PC-9 (cell line): ENCODE measurements at regions of chr20 and their contacts with region 1.

Region 1: DNA sequence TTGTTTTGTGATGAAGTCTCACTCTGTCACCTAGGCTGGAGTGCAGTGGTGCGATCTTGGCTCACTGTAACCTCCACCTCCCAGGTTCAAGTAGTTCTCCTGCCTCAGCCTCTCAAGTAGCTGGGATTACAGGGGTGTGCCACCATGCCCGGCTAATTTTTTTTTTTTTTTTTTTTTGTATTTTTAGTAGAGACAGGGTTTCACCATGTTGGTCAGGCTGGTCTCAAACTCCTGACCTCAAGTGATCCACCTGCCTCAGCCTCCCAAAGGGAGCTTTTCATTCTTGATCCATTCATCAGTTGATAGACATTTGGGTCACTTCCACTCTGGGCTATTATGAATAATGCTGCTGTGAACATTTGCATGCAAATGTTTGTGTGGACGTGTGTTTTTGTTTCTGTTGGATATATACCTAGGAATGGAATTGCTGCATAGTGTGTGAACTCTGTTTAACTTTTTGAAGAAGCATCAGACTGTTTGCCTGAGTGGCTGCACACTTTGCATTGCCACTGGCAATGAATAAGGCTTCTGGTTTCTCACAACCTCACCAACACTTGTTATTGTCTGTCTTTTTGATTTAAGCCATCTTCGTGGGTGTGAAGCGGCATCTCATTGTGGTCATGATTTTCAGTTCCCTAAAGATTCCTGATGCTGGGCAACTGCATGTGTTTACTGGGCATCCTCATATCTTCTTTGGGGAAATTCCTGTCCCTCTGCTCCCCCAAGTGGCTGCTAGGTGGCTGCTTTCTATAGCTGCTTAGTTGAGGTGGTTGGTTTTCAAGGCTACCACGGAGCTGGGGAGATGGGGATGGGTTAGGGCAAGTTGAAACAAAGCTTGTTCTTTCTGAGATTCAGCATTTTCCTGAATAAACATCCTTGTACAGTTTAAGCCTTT is 403.6 kb upstream of the SULF2 start:
- DNase-seq: peak; percentile 23 to 49
- H3K4me3 ChIP-seq: no peak overlapping the region
- H3K27ac ChIP-seq: no peak overlapping the region
- H3K4me1 ChIP-seq: peaks cover 22% of the 10 kb centered on the region
- H3K27me3 ChIP-seq: no peaks in the 10 kb centered on the region
- CTCF ChIP-seq: peak; percentile 61

Region 2: DNA sequence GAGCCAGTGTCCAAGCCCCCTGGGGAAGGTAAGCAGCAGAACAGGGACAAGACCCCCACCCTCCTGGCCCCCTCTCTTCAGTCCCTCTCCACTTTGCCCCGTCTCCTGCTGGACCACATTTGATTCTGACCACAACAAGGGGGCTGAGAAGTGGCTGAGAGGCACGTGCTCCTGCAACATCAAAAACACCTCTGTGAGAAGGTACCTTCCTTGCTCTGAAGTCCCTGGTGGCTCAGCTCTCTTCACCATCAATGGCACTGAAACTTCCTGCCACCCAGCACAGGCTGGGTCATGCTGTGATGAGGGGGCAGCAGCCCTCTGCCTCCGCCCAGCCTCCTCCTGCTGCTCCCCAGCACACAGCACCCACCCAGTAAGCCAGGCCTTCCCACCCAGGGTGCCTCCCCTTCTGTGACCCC is 842.8 kb before region 1 on chr20:
- CTCF ChIA-PET with region 1: interaction called, 11 read pairs
- POLR2A ChIA-PET with region 1: no interaction called
- intact Hi-C with region 1: no loop called
- DNase-seq: no peak
- H3K4me3 ChIP-seq: no peak overlapping the region
- H3K27ac ChIP-seq: no peak overlapping the region
- H3K4me1 ChIP-seq: peaks cover 25% of the 10 kb centered on the region
- H3K27me3 ChIP-seq: no peaks in the 10 kb centered on the region
- CTCF ChIP-seq: no peak

Region 3: DNA sequence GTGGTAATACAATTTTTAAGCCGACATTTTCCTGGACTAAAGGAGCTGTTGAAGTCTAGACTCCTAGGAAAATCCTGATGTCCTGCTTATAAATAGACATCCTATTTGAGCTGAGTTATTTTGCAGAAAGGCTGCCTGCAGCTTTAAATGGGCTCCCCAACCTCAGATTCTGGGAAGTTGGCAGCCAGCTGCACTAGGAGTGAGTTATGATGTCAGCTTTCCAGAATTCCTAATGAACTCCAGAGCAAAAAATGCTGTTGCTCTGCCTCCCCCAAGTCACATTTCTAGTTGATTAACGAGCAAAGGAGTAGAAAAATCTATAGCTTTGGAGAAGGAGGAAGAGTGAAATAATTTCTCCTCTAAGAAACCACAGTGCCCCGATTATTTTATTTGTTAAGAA is 57.3 kb before region 1 on chr20:
- CTCF ChIA-PET with region 1: no interaction called
- POLR2A ChIA-PET with region 1: no interaction called
- intact Hi-C with region 1: no loop called
- DNase-seq: no peak
- H3K4me3 ChIP-seq: no peak overlapping the region
- H3K27ac ChIP-seq: no peak overlapping the region
- H3K4me1 ChIP-seq: peaks cover 12% of the 10 kb centered on the region
- H3K27me3 ChIP-seq: no peaks in the 10 kb centered on the region
- CTCF ChIP-seq: no peak

Region 4: DNA sequence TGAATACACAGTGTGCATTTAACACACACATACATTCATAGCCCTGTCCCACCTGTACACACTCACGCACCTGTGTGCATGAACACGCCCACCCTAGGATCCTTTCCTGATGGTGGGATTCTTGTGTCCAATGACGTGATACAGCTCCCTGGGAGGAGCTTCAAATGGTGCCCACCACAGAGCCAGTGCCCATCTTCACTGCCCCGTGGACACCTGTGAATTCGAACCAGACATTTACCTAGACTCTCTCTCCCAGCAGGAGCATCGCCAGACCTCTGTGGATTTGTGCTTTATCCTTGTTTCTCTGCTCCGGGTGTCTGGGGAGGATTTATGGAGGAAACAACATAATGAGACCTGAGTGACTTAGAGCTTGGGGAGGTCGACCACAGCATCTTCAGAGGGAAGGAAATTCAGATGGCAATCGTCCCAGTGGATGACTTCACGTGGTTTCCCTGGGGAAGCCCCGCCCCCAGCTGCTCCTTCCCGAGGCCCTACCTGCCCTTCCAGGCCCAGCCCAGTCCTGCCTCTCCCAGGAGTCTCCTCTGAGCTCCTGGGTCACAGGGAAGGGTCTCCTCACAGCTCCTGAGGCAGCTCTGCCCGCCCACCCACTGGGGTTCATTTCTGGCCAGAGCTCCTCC is 26.5 kb after region 1 on chr20:
- CTCF ChIA-PET with region 1: no interaction called
- POLR2A ChIA-PET with region 1: no interaction called
- intact Hi-C with region 1: no loop called
- DNase-seq: peak; percentile 55 to 58
- H3K4me3 ChIP-seq: no peak overlapping the region
- H3K27ac ChIP-seq: peak overlapping the region; percentile 92
- H3K4me1 ChIP-seq: peaks cover 51% of the 10 kb centered on the region
- H3K27me3 ChIP-seq: no peaks in the 10 kb centered on the region
- CTCF ChIP-seq: no peak

Region 5: GRCh38 chr20:48722737-48723191 is 533.9 kb after region 1 on chr20:
- CTCF ChIA-PET with region 1: no interaction called
- POLR2A ChIA-PET with region 1: no interaction called
- intact Hi-C with region 1: no loop called
- DNase-seq: no peak
- H3K4me3 ChIP-seq: no peak overlapping the region
- H3K27ac ChIP-seq: no peak overlapping the region
- H3K4me1 ChIP-seq: peaks cover 6% of the 10 kb centered on the region; the same call in 1 of the 2 replicates
- H3K27me3 ChIP-seq: no peaks in the 10 kb centered on the region
- CTCF ChIP-seq: no peak